ENCODE measurements at regions of chr12 and their contacts with region 1.

Region 1: GRCh38 chr12:132904718-132905328 is 17.4 kb upstream of the CHFR start:
- DNase-seq: peak; percentile 92
- H3K4me3 ChIP-seq: peak overlapping the region; percentile 35 to 40 (median 39)
- H3K27ac ChIP-seq: peak overlapping the region; percentile 20 to 59 (median 41)
- H3K4me1 ChIP-seq: peaks cover 5 to 32% (median 28%) of the 10 kb centered on the region in 4 donors
- H3K27me3 ChIP-seq: no peaks in the 10 kb centered on the region
- CTCF ChIP-seq: peak; percentile 96 to 100 (median 97)
- EP300 ChIP-seq: no peak
- POLR2A ChIP-seq: no peak

Region 2: DNA sequence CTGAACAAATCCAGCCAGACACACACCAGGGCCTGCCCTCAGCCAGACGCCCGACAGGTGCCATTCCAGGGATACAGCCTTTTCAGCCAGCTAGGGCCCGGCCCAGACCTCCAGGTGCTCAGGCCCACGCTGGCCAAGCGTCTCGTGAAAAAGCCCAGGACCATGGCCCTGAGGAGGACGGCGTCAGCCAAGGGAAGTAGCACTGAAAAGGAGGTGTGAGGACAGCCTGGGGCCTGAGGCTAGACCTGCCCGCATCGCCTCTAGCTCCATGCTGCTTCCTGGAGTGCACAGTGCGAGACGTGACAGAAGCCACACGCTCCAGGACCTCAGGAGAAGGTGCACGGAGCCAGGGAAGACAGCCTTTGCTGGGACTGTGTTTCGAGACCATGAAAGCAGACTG is 106.0 kb before region 1 on chr12:
- intact Hi-C with region 1: no loop called
- DNase-seq: no peak
- H3K4me3 ChIP-seq: no peak overlapping the region
- H3K27ac ChIP-seq: no peak overlapping the region
- H3K4me1 ChIP-seq: no peaks in the 10 kb centered on the region
- H3K27me3 ChIP-seq: no peaks in the 10 kb centered on the region
- CTCF ChIP-seq: no peak
- EP300 ChIP-seq: no peak
- POLR2A ChIP-seq: no peak

Region 3: DNA sequence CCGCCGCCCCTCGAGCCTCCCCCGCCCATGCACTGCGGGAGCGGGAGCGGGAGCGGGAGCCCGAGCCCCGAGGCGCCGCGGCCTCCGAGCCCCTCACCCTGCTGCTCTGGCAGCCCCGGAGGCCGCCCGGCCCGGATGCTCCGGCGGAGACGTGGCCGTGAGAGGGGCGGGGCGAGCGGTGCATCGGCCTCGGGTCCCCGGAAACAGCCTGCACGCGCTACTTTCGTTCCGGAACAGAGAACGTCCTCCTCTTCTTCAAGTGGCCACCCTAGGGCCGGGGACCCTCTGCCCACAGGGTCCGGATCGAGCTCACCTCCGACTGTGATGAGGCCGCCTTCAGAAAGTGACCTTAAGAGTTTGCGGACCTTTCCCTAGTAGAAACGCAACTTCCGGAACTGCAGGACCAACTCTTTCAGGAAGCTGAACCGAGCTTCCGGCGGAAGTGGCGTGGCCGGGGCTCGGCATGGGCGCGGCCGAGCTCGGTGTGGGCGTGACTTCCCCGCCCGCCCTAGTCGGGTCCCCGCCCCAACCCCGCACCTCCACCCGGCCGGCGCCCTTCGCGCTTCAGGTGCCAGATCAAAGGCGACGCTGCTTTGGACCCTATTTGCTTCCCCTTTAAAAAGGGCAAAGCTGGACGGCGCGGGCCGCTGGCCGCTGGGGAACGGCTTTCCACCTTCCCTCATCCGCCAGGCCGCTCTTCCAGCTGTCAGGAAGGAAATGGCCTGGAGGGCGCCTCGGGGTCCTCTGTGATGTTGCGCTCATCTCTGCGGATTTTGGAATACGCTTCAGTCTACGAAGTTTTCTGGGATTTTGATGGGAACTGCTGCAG is 75.9 kb before region 1 on chr12 and contains the start of gene GOLGA3:
- intact Hi-C with region 1: loop called (anchors 5 kb)
- DNase-seq: peak; percentile 98
- H3K4me3 ChIP-seq: peak within 1 kb of the TSS; percentile 75 to 99 (median 83)
- H3K27ac ChIP-seq: peak within 1 kb of the TSS; percentile 94 to 99 (median 94)
- H3K4me1 ChIP-seq: peaks cover 13 to 36% (median 29%) of the 10 kb centered on the region in 4 donors
- H3K27me3 ChIP-seq: no peaks in the 10 kb centered on the region
- CTCF ChIP-seq: peak in 1 of 3 experiments; percentile 22
- EP300 ChIP-seq: no peak
- POLR2A ChIP-seq: peak; percentile 16
- total RNA-seq, gene GOLGA3: 72.3 to 123 (median 93.4) TPM

Region 4: DNA sequence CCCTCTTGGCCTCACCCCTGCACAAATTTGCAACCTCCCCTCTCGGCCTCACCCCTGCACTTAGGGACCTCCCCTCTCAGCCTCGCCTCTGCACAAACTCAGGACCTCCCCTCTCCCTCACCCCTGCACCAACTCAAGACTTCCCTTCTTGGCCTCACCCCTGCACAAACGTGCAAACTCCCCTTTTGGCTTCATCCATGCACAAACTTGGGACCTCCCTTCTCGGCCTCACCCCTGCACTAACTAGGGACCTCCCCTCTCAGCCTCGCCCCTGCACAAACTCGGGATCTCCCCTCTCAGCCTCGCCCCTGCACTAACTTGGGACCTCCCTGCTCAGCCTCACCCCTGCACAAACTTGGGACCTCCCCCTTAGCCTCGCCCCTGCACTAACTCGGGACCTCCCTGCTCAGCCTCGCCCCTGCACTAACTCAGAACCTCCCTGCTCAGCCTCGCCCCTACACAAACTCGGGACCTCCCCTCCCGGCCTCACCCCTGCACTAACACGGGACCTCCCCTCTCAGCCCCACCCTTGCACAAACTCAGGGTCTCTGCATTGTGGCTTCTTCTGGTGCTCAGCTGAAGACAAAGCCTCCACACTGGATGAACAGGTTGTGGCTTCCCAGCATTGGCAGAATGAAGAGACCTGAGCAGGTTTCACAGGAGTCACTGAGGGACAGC is 65.1 kb before region 1 on chr12:
- intact Hi-C with region 1: no loop called
- DNase-seq: no peak
- H3K4me3 ChIP-seq: no peak overlapping the region
- H3K27ac ChIP-seq: no peak overlapping the region
- H3K4me1 ChIP-seq: peaks cover 0 to 21% (median 15%) of the 10 kb centered on the region in 4 donors
- H3K27me3 ChIP-seq: no peaks in the 10 kb centered on the region
- CTCF ChIP-seq: no peak
- EP300 ChIP-seq: no peak
- POLR2A ChIP-seq: no peak

Measured in esophagus muscularis mucosa (tissue), 4 donors.